Dendritic cell treated with granulocyte-macrophage colony-stimulating factor and Interleukin-4, amounts not matched to agents 40 ng/mL and 50 ng/mL, for 4 days (primary cell): ENCODE measurements at regions of chr2 and their contacts with region 1.

Region 1: DNA sequence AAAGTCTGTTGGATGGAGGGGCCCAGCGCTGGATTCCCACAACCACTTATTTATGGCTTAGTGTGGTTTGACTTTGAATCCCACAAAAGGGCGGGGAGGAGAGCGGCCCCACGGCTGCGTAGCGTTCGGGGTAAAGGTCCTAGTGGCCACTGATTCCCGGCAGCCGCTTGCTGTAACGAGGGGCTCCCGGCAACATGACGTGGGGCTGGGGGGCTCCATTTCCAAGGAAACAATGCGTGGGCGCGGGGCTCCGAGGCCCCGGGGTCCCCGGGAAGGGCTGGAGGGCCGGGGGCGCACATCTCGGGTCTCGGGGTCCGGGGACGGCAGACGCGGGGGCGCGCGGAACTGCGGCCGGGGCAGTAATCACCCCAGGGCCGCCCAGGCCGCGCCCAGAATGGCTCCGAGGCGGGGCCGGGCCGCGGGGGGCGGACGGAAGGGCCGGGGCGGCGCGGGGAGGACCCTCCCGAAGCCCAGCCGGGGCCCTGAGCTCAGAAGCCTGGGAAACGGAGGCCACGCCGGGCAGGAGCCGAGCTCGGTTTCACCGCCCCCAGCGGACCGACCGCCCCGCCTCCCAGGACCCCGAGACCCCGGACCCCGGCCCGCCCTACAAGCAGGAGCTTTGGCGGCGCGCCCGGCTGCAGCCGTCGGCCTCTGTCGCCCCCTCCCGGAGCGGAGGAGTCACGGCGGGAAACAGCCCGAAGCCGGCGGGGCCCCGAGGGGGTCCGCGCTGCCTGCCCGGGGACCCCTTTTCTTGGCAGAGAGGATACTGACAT is 11.9 kb upstream of the MLPH start:
- H3K4me3 Mint-ChIP-seq: peak overlapping the region; percentile 91
- H3K27ac Mint-ChIP-seq: peak overlapping the region; percentile 98
- H3K4me1 Mint-ChIP-seq: peaks cover 27% of the 10 kb centered on the region
- H3K27me3 Mint-ChIP-seq: peaks cover 39% of the 10 kb centered on the region

Region 2: DNA sequence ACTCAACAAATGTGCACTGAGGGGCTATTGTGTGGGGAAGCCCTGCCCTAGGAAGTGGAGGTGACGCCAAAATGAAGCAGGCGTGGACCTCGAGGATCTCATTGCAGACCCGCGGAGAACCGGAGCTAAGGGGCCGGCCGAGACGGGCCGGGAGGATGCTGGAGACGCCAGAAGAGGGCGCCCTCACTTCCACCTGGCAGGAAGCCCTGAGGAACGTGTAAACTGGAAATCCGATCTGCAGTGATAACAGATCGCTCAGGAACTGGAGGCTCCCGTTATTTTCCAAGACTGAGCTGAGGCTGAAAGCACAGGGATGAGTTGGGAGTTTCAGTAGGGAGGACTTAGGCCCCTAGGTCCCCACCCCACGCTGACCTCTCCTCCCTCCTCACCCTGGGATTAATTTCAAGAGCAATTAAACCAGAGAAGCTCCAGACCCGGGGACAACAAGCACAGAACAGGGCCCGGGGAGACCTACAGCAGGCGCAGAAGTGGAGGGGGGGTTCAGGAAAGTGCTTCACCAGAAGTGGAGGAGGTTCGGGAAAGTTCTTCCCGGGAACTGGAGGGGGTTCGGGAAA is 53.5 kb before region 1 on chr2:
- intact Hi-C with region 1: loop called (anchors 1 kb)
- H3K4me3 Mint-ChIP-seq: no peak overlapping the region
- H3K27ac Mint-ChIP-seq: no peak overlapping the region
- H3K4me1 Mint-ChIP-seq: peaks cover 6% of the 10 kb centered on the region
- H3K27me3 Mint-ChIP-seq: peaks cover 35% of the 10 kb centered on the region

Region 3: GRCh38 chr2:237431837-237432236 is 43.3 kb before region 1 on chr2:
- intact Hi-C with region 1: no loop called
- H3K4me3 Mint-ChIP-seq: no peak overlapping the region
- H3K27ac Mint-ChIP-seq: no peak overlapping the region
- H3K4me1 Mint-ChIP-seq: peaks cover 15% of the 10 kb centered on the region
- H3K27me3 Mint-ChIP-seq: peaks cover 39% of the 10 kb centered on the region

Region 4: GRCh38 chr2:237488901-237489801 is 14.0 kb after region 1 on chr2:
- intact Hi-C with region 1: no loop called
- H3K4me3 Mint-ChIP-seq: no peak overlapping the region
- H3K27ac Mint-ChIP-seq: no peak overlapping the region
- H3K4me1 Mint-ChIP-seq: peaks cover 8% of the 10 kb centered on the region
- H3K27me3 Mint-ChIP-seq: peaks cover 70% of the 10 kb centered on the region

Region 5: DNA sequence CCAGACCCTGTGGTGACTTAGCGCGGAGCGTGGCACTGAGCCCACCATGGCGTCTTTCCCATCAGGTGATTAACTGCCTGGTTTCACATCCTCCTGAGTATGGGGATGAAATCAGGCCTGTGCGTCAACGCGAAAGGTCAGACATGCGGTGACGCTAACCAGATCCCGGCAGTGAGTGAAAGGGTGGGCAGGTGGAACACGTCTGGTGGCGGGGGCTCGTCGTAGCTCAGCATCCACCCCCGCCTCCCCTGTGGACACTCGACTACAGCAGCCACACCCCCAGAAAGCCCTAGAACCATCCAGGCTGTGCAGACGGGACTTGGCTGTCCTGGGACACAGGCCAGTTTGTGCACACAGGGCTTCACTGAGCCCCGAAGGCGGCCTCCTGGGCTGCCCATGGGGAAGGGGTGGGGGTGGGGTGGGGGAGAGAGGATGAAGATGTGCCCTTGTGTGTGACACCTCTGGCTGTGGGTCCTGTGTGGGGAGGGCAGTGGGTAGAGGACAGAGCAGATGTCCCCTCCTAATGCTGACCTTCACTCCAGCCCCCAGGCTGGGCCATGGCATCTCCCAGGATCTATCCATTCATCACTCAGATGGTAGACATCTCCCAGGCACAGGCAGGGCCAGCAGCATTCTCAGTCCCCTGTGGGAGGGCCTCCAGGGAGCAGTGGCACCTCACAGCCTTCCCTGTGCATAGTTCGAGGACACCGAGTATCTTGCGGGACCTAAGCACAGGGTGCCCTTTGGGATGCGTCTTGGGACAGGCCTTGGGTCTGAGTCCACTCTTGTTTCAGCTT is 411.8 kb after region 1 on chr2:
- intact Hi-C with region 1: no loop called
- H3K4me3 Mint-ChIP-seq: no peak overlapping the region
- H3K27ac Mint-ChIP-seq: peak overlapping the region; percentile 97
- H3K4me1 Mint-ChIP-seq: peaks cover 95% of the 10 kb centered on the region
- H3K27me3 Mint-ChIP-seq: no peaks in the 10 kb centered on the region